ENCODE measurements at regions of chr12 and their contacts with region 1.

Region 1: GRCh38 chr12:46675736-46676135 is 150.1 kb downstream of the SLC38A4 start:
- DNase-seq: peak in 1 of 5 donors; percentile 23
- ATAC-seq: no peak
- H3K4me3 ChIP-seq: peak overlapping the region in 1 of 12 donors; percentile 23
- H3K27ac ChIP-seq: no peak overlapping the region
- H3K4me1 ChIP-seq: peaks cover 0 to 8% (median 0%) of the 10 kb centered on the region in 12 donors
- H3K27me3 ChIP-seq: no peaks in the 10 kb centered on the region
- CTCF ChIP-seq: peak; percentile 58 to 78 (median 68)
- POLR2A ChIP-seq: no peak

Region 2: GRCh38 chr12:46147144-46147543 is 528.6 kb before region 1 on chr12:
- intact Hi-C with region 1: loop called in 2 of 10 experiments (anchors 10 kb)
- DNase-seq: no peak
- ATAC-seq: no peak
- H3K4me3 ChIP-seq: no peak overlapping the region
- H3K27ac ChIP-seq: no peak overlapping the region
- H3K4me1 ChIP-seq: no peaks in the 10 kb centered on the region
- H3K27me3 ChIP-seq: peaks cover 0 to 6% (median 0%) of the 10 kb centered on the region in 9 donors
- CTCF ChIP-seq: no peak
- POLR2A ChIP-seq: no peak

Region 3: GRCh38 chr12:46442239-46442638 is 233.5 kb before region 1 on chr12:
- intact Hi-C with region 1: no loop called
- DNase-seq: no peak
- ATAC-seq: no peak
- H3K4me3 ChIP-seq: no peak overlapping the region
- H3K27ac ChIP-seq: no peak overlapping the region
- H3K4me1 ChIP-seq: peaks cover 0 to 30% (median 18%) of the 10 kb centered on the region in 12 donors
- H3K27me3 ChIP-seq: no peaks in the 10 kb centered on the region
- CTCF ChIP-seq: no peak
- POLR2A ChIP-seq: no peak

Region 4: GRCh38 chr12:46933947-46934346 is 258.2 kb after region 1 on chr12:
- intact Hi-C with region 1: loop called (anchors 2 to 5 kb)
- DNase-seq: no peak
- ATAC-seq: peak; percentile 51 to 72 (median 60)
- H3K4me3 ChIP-seq: no peak overlapping the region
- H3K27ac ChIP-seq: no peak overlapping the region
- H3K4me1 ChIP-seq: no peaks in the 10 kb centered on the region
- H3K27me3 ChIP-seq: no peaks in the 10 kb centered on the region
- CTCF ChIP-seq: peak; percentile 36 to 70 (median 59)
- POLR2A ChIP-seq: no peak

Region 5: DNA sequence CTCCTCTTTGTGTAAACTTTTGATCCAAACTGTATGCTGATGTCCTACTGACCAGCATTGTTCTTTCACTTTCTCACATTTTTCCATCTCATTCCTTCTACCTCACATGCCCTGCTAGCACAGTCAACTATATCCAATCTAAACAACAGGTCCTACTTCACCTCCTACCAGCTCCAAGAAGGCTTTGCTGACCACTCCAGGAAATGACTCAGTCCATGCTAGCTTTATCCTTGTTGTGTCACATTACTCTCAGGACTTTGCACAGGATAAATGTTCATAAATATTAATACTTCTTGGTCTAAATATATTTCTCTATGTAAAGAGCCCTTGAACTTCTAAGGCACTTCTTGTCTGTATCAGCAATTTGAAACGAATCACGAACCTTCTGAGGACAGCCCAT is 338.7 kb after region 1 on chr12:
- intact Hi-C with region 1: loop called in 2 of 10 experiments (anchors 10 kb)
- DNase-seq: no peak
- ATAC-seq: no peak
- H3K4me3 ChIP-seq: no peak overlapping the region
- H3K27ac ChIP-seq: no peak overlapping the region
- H3K4me1 ChIP-seq: no peaks in the 10 kb centered on the region
- H3K27me3 ChIP-seq: peaks cover 0 to 10% (median 0%) of the 10 kb centered on the region in 9 donors
- CTCF ChIP-seq: no peak
- POLR2A ChIP-seq: no peak